ENCODE measurements at regions of chr3 and their contacts with region 1.

Region 1: DNA sequence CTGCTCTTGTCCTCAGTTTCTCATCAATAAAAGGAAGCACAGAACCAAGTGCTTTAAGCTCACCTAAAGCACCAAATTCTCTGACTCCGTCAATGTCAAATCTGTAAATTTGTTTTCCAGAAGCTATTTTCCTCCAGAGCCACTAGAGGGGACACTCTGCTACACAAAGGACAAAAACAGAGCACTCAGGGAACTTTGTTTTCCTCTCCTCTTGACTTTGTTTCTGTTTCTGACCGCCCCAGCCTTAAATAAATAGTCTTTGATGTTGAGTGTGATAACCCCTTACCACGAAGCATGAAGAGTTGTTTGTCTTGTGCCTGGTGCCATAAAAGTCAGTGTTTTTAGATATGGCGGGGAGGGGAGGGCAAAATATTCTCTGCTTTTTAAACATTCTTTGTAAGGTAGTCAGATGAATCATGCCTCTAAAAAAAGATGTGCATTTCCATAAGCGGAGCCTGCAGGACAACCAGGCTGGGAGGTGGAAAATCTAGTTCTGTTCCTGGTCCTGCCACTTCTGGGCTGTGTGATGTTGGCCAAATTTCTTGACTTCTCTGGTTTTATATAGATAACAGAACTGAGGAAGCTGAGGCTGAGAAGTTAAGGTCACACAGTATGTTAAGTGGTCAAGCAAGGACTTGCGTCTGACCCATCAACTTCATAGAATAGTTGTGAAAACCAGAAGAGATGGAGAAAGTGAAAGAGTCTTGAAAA is 7.3 kb upstream of the ZBTB38 start:
- DNase-seq: no peak
- H3K4me3 Mint-ChIP-seq: no peak overlapping the region
- H3K27ac Mint-ChIP-seq: no peak overlapping the region
- H3K4me1 Mint-ChIP-seq: peaks cover 10% of the 10 kb centered on the region
- H3K27me3 Mint-ChIP-seq: peaks cover 20% of the 10 kb centered on the region

Region 2: GRCh38 chr3:140863580-140864009 is 497.4 kb before region 1 on chr3:
- intact Hi-C with region 1: no loop called
- DNase-seq: peak; percentile 8
- H3K4me3 Mint-ChIP-seq: no peak overlapping the region
- H3K27ac Mint-ChIP-seq: no peak overlapping the region
- H3K4me1 Mint-ChIP-seq: no peaks in the 10 kb centered on the region
- H3K27me3 Mint-ChIP-seq: peaks cover 4% of the 10 kb centered on the region

Region 3: DNA sequence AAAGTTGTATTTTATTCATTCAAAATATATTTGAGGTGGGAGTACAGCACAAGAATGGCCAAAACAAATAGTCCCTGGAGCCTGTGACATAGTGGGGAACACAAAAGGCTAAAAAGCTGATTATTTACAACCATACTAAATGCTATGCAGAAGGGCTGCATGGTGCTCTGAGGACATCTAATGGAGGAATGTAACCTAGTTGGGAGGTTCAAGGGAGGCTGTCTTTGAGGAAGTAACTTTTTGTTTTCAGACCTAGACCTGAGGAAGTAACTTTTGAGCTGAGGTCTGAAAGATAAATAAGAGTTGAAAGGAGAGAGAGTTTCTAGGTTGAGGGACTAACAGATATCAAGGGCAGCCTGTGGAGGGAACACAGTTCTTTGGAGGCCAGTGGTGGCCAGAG is 91.0 kb after region 1 on chr3:
- intact Hi-C with region 1: loop called (anchors 1 kb)
- DNase-seq: peak; percentile 26
- H3K4me3 Mint-ChIP-seq: no peak overlapping the region
- H3K27ac Mint-ChIP-seq: no peak overlapping the region
- H3K4me1 Mint-ChIP-seq: peaks cover 18% of the 10 kb centered on the region
- H3K27me3 Mint-ChIP-seq: no peaks in the 10 kb centered on the region

Region 4: DNA sequence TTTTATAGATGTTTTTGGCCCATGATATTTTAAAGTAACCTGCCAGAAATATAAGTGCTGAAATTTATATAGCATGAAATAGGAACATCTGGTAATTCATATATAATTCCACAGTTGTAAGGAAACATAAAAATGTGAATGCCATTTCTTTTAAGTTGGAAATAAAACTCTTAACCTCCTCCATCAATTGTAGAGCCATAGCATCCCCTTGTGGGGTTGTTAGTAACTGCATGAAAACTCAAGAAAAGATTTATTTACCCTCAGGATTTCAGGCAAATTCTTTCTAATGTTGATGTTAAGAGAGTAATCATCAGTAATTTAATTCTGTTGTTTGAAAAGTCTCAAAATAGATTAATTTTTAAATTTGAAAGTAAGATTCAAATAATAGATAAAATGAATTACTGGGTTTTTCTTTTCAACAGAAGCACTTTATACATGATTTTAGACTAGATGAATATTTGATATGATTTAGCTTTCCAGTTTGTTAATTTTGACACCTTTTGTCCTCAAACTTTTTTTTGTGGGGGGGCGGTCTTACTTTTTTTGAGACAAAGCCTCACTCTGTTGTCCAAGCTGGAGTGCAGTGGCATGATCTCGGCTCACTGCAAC is 200.5 kb after region 1 on chr3:
- intact Hi-C with region 1: loop called (anchors 1 kb)
- DNase-seq: peak; percentile 17
- H3K4me3 Mint-ChIP-seq: no peak overlapping the region
- H3K27ac Mint-ChIP-seq: peak overlapping the region; percentile 61
- H3K4me1 Mint-ChIP-seq: peaks cover 24% of the 10 kb centered on the region
- H3K27me3 Mint-ChIP-seq: no peaks in the 10 kb centered on the region

Region 5: GRCh38 chr3:141828487-141829268 is 467.6 kb after region 1 on chr3:
- intact Hi-C with region 1: no loop called
- DNase-seq: no peak
- H3K4me3 Mint-ChIP-seq: no peak overlapping the region
- H3K27ac Mint-ChIP-seq: no peak overlapping the region
- H3K4me1 Mint-ChIP-seq: no peaks in the 10 kb centered on the region
- H3K27me3 Mint-ChIP-seq: peaks cover 13% of the 10 kb centered on the region

Measured in activated T-helper 1 cell treated with anti-CD3 and anti-CD28 coated beads, Interleukin-12 subunit alpha, Interleukin-12 subunit beta, Interleukin-2, Interleukin-4 antibody, amounts not matched to agents 30 ng/mL and 10 ng/mL and 1 ng/mL, durations not matched to agents 14 hours and 24 hours and 36 hours (primary cell).